WTC11 (cell line): ENCODE measurements at regions of chr3 and their contacts with region 1.

Region 1: DNA sequence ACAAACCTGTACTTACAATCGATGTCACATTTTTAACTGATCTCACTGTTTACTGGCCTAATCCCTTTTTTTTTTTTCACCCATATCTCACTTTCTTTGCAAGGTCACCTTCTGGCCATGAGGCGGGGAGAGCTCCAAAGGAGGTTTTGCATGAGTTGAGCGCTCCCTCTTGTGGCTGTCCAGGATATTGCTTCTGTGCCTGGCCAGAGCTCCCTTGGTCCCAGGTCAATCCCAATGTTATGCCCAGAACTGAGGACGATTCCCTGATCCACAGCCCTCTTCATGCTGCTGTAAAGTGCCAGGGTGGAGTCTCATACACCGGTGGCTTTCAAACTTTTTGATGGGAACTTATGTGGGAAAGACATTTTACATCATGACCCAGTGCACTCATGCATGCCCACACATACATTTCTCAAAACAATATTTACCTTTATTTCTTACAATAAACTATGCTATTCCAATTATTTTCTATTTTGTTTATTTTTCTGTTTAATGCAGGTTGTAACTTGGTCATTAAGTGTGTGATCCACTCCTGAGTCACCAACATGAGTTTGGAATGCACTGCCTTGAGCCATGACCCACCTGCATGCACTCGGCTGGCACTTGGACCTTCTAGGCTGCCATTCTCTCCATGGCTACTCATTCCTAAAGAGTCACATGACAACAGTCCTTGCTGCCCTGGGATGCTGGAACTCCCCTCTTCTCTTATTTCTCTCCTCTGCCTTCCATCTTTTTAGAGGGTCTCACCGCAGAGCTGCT is 9.6 kb upstream of the SST start:
- DNase-seq: peak; percentile 92
- ATAC-seq: peak; percentile 91
- H3K4me3 Mint-ChIP-seq: no peak overlapping the region
- H3K27ac Mint-ChIP-seq: 0 out of 2 replicates have a peak overlapping the region, but pooled peaks have one; percentile 15
- H3K4me1 Mint-ChIP-seq: peaks cover 20% of the 10 kb centered on the region
- H3K27me3 Mint-ChIP-seq: peaks cover 39% of the 10 kb centered on the region
- CTCF ChIP-seq: peak; percentile 93

Region 2: DNA sequence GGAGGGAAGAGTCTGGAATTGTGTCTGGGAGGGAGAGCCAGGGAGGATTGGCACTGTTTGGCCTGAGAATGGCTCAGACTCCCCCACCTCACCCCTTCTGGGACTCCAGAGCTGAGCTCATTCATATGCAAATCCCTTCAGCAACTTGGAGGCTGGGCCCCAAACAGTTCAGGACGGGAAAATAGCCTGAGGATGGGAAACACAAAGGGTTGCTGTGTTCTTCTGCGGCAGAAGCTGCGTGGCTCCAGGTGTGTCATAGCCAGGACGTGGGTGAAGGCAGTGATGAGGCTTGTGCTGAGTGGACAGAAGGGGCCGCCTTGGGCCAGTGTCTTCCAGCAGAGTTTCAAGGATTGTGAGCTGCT is 404.9 kb before region 1 on chr3:
- CTCF ChIA-PET with region 1: interaction called, 14 read pairs
- POLR2A ChIA-PET with region 1: no interaction called
- DNase-seq: peak; percentile 77
- ATAC-seq: peak; percentile 99
- H3K4me3 Mint-ChIP-seq: peak overlapping the region; percentile 28; the same call in 1 of the 2 replicates
- H3K27ac Mint-ChIP-seq: peak overlapping the region; percentile 87
- H3K4me1 Mint-ChIP-seq: peaks cover 39% of the 10 kb centered on the region
- H3K27me3 Mint-ChIP-seq: no peaks in the 10 kb centered on the region
- CTCF ChIP-seq: no peak

Region 3: DNA sequence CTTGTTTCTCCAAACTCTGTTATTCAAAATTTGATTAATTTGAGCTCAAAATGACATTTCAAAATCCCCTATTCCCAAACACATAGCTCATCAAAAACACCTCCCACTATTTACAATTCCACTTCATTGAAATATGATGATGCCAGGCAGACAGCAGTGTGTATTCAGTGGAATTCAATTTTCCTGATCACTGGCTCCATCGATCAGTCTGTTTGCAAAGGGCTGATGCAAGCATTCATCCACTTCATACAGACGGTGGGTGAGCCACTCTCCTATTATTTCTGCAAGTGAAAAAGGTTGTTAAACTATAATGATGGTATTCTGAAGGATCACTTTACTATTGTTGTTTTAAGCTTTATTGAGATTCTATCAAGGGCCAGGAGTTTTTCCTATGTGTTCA is 220.9 kb before region 1 on chr3:
- CTCF ChIA-PET with region 1: no interaction called
- POLR2A ChIA-PET with region 1: no interaction called
- DNase-seq: no peak
- ATAC-seq: no peak
- H3K4me3 Mint-ChIP-seq: no peak overlapping the region
- H3K27ac Mint-ChIP-seq: no peak overlapping the region
- H3K4me1 Mint-ChIP-seq: peaks cover 44% of the 10 kb centered on the region
- H3K27me3 Mint-ChIP-seq: peaks cover 7% of the 10 kb centered on the region
- CTCF ChIP-seq: no peak

Region 4: GRCh38 chr3:187567661-187568121 is 112.1 kb before region 1 on chr3:
- CTCF ChIA-PET with region 1: interaction called, 10 read pairs
- POLR2A ChIA-PET with region 1: interaction called, 3 read pairs
- DNase-seq: no peak
- ATAC-seq: peak; percentile 67
- H3K4me3 Mint-ChIP-seq: no peak overlapping the region
- H3K27ac Mint-ChIP-seq: peak overlapping the region; percentile 57
- H3K4me1 Mint-ChIP-seq: peaks cover 57% of the 10 kb centered on the region
- H3K27me3 Mint-ChIP-seq: no peaks in the 10 kb centered on the region; the same call in 1 of the 2 replicates
- CTCF ChIP-seq: no peak

Region 5: DNA sequence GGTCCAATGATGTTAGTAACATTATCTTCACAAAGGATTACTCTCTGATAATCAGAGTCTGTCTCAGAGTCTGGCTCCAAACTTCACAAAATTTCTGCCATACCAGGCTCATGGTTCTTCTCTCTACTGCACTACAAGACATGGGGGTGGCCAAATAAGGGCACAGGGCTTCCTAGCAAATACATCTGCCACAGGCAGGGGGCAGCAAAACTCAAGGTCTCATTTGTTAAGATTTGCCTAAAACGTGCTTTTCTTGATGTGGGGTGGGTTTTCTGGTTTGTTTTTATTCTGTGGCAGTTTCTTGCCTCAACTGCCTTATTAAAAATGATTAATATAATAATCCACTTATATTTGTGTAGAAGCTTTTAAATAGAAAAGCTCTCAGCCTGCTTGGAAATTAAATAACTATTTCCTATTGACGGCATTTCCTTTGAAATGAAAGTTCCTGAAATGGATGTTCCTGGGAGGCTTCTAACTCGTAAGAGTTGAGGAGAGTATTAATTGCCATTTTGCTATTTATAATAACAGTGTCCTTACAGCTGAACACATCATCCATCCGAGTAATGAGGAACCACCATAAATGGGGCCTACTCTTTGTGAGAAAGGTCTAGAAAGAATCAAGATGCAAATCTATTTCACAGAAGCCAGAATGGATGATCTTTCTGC is 63.4 kb before region 1 on chr3:
- CTCF ChIA-PET with region 1: interaction called, 56 read pairs
- POLR2A ChIA-PET with region 1: no interaction called
- DNase-seq: peak; percentile 62
- ATAC-seq: peak; percentile 67
- H3K4me3 Mint-ChIP-seq: no peak overlapping the region
- H3K27ac Mint-ChIP-seq: no peak overlapping the region
- H3K4me1 Mint-ChIP-seq: peaks cover 57% of the 10 kb centered on the region
- H3K27me3 Mint-ChIP-seq: peaks cover 96% of the 10 kb centered on the region
- CTCF ChIP-seq: peak; percentile 69

Region 6: GRCh38 chr3:187709155-187709554 is 29.3 kb after region 1 on chr3:
- CTCF ChIA-PET with region 1: interaction called, 25 read pairs
- POLR2A ChIA-PET with region 1: no interaction called
- DNase-seq: peak; percentile 26
- ATAC-seq: peak; percentile 88
- H3K4me3 Mint-ChIP-seq: no peak overlapping the region
- H3K27ac Mint-ChIP-seq: no peak overlapping the region
- H3K4me1 Mint-ChIP-seq: peaks cover 2% of the 10 kb centered on the region; the same call in 1 of the 2 replicates
- H3K27me3 Mint-ChIP-seq: no peaks in the 10 kb centered on the region
- CTCF ChIP-seq: no peak

Region 7: DNA sequence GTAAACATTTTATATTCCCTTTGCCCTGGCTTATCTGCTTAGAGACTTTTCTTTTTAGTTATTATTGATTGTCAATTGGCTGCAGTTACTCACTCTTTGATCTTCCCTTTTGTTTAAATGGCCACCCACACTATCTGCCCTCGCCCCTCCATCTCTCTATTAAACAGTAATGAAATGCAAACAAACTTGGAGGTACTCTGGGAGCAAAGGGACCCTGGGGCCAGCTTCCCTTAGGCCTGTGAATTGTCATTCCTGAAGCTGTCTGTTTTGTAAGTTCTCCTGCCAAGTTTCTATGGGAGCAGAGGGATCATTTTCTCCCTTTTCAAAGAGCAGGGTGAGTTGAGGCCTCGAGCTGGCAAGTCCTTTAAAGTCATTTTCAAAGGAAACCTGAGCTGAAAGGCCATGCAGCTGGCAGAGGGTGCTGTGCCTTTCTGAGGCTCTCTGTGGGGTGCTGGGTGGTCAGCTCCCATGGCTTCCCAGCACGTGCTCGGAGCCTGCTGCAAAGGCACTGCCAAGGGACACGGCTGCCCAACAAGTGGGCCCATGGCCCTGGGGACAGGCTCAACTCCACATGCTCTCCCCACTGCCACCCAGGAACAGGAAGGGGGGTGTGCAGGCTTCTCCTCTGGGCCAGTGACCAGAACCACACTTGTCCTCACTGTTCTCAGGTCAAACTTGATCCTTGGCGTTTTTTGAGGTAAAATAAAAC is 40.0 kb after region 1 on chr3:
- CTCF ChIA-PET with region 1: interaction called, 25 read pairs
- POLR2A ChIA-PET with region 1: no interaction called
- DNase-seq: no peak
- ATAC-seq: no peak
- H3K4me3 Mint-ChIP-seq: no peak overlapping the region
- H3K27ac Mint-ChIP-seq: peak overlapping the region; percentile 1; the same call in 1 of the 2 replicates
- H3K4me1 Mint-ChIP-seq: peaks cover 27% of the 10 kb centered on the region
- H3K27me3 Mint-ChIP-seq: peaks cover 9% of the 10 kb centered on the region; the same call in 1 of the 2 replicates
- CTCF ChIP-seq: no peak

Region 8: DNA sequence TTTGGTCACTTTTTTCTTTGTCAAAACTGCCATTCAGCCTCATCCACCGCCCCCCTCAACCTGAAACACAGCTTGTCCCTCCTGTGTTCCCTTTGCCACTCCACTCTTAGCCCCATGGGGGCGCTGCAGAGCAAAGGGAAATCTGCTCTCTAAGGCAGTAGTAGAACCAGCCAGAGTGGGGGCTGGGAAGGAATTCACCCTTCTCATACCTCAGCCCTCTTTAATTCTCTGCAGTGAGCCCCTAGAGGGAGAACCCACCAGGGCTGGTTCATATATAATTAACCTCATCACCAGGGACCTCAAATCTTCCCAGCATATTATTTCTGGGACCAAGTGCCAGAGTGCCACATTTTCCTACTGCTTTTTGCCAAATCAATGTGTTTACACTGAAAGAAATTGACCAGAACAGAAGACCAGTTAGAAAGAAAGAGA is 68.2 kb after region 1 on chr3:
- CTCF ChIA-PET with region 1: no interaction called
- POLR2A ChIA-PET with region 1: no interaction called
- DNase-seq: peak; percentile 99
- ATAC-seq: peak; percentile 72
- H3K4me3 Mint-ChIP-seq: peak overlapping the region; percentile 41
- H3K27ac Mint-ChIP-seq: peak overlapping the region; percentile 100
- H3K4me1 Mint-ChIP-seq: peaks cover 59% of the 10 kb centered on the region
- H3K27me3 Mint-ChIP-seq: peaks cover under 1% of the 10 kb centered on the region; the same call in 1 of the 2 replicates
- CTCF ChIP-seq: peak; percentile 95

Region 9: DNA sequence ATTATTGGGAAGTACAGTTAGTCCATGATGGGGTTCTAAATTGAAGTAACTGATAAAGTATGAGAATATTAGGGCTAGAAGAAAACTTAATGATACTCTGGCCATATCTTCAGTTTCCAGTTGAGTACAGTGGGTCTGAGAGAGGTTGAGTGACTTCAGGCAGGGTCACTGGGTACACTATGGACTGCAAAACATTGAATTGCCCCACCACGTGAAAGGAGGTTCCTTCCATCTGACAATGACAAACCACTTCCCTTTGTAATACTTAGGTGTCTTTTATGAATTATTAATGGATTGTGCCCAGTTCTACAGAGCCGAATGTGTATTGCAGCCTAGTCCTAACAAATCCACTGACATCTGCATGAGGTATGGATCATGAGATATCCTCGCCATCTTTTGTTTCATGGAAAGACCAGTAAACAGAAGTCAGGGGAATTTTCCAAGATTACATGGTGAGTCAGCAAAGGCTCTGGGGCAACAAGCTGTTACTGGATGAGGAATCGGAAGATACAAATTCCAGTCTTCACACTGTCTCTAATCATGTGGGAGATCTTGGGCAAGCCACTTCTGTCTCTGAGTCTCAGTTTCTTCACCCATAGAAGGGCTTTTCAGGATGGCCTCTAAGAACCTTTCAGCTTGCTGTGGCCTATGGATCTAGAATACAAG is 131.9 kb after region 1 on chr3:
- CTCF ChIA-PET with region 1: no interaction called
- POLR2A ChIA-PET with region 1: no interaction called
- DNase-seq: no peak
- ATAC-seq: no peak
- H3K4me3 Mint-ChIP-seq: no peak overlapping the region
- H3K27ac Mint-ChIP-seq: no peak overlapping the region
- H3K4me1 Mint-ChIP-seq: peaks cover 30% of the 10 kb centered on the region
- H3K27me3 Mint-ChIP-seq: no peaks in the 10 kb centered on the region
- CTCF ChIP-seq: no peak